B cell (primary cell): ENCODE measurements at regions of chr11 and their contacts with region 1.

Region 1: DNA sequence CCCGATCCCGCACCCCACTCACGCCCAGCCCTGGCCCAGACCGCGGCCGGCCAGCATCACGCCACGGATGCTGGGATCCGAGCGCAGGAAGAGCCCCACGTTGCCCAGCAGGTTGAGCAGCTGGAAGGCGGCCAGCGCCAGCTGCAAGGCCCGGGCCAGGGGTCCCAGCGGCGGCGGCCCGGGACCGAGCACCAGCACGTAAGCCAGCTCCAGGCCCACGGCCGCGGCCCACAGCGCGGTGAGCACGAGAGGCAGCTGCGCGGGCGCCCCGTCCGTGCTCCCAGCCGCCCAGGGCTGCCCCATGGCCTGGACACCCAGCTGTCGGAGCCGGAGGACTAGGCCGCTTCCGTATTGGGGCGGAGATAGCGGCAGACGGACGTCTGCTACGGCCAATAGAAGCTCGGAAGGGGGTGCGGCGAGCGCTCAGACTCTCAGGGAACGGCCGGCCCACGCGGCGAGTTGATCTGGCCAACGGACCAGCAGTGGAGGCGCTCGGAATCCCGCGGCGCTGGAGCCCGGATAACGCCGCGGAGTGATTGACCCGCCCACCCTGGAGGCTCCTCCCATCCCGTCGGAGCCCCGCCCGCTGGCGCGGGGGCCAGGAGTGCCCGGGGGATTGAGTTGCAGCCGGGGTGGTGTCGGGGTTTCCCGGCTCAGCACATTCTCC is at the start of gene ZDHHC24:
- DNase-seq: peak; percentile 91
- ATAC-seq: peak; percentile 82
- H3K4me3 ChIP-seq: peak within 1 kb of the TSS; percentile 74 to 89 (median 83)
- H3K4me3 Mint-ChIP-seq: peak within 1 kb of the TSS; percentile 95
- H3K27ac ChIP-seq: peak within 1 kb of the TSS; percentile 62 to 91
- H3K27ac Mint-ChIP-seq: peak within 1 kb of the TSS; percentile 89
- H3K4me1 ChIP-seq: peaks cover 26 to 34% of the 10 kb centered on the region in 2 donors
- H3K4me1 Mint-ChIP-seq: peaks cover 42% of the 10 kb centered on the region
- H3K27me3 ChIP-seq: no peaks in the 10 kb centered on the region
- H3K27me3 Mint-ChIP-seq: no peaks in the 10 kb centered on the region
- CTCF ChIP-seq: no peak
- total RNA-seq, gene ZDHHC24: 32.6 and 33.2 TPM in 2 replicates

Region 2: DNA sequence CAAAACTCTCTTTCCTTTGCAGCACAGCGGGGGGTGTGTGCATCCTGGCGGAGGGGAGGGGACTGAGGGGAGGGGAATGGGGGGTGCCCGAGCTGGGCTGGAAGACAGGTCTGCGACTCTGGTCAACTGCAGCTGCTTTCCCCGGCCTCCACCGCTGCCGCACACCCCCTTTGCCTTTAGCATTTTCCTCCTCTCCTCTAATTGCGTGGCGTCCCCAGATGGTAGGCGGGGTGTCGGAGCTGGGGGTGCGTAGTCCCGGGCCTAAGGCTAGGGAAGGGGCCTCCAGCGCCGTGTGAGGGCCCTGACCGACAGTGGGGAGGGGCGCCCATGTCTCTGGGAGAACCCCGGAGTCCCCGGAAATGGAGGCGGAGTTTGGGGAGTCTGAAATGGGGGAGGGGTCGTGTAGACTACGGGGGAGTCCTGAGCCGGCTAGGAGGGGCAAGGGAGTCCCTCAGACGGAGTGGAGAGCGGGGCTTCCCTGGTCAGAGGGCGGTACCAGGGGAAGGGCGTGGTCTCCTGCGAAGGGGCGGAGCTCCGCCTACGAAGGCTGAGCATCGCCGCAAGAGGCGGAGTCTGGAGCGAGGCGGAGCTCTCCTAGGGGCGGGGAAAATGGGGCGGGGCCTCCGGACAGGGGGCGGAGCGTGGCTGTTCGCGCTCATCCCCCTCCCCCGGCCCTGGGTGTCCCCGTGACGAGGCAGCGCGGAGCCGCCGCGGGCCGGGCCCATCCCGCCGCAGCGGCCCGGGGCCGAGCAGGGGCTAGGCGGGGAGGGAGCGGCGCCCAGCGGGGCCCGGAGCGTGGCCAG is 79.4 kb before region 1 on chr11 and contains the start of gene PELI3:
- CTCF ChIA-PET with region 1: interaction called, 4 read pairs
- POLR2A ChIA-PET with region 1: interaction called, 3 read pairs
- intact Hi-C with region 1: loop called (anchors 1 kb)
- DNase-seq: peak; percentile 97
- ATAC-seq: peak; percentile 92
- H3K4me3 ChIP-seq: peak within 1 kb of the TSS; percentile 19 to 82 (median 71)
- H3K4me3 Mint-ChIP-seq: peak within 1 kb of the TSS; percentile 95
- H3K27ac ChIP-seq: peak within 1 kb of the TSS; percentile 81 to 84
- H3K27ac Mint-ChIP-seq: peak within 1 kb of the TSS; percentile 89
- H3K4me1 ChIP-seq: peaks cover 35 to 40% of the 10 kb centered on the region in 2 donors
- H3K4me1 Mint-ChIP-seq: peaks cover 35% of the 10 kb centered on the region
- H3K27me3 ChIP-seq: no peaks in the 10 kb centered on the region
- H3K27me3 Mint-ChIP-seq: no peaks in the 10 kb centered on the region
- CTCF ChIP-seq: no peak
- total RNA-seq, gene PELI3: 15.6 and 17.0 TPM in 2 replicates

Region 3: GRCh38 chr11:66480117-66480938 is 65.5 kb before region 1 on chr11 and contains the start of gene DPP3:
- CTCF ChIA-PET with region 1: no interaction called
- POLR2A ChIA-PET with region 1: interaction called, 3 read pairs
- intact Hi-C with region 1: loop called (anchors 2 kb)
- DNase-seq: peak; percentile 96
- ATAC-seq: peak; percentile 97
- H3K4me3 ChIP-seq: peak within 1 kb of the TSS; percentile 36 to 92 (median 71)
- H3K4me3 Mint-ChIP-seq: peak within 1 kb of the TSS; percentile 92
- H3K27ac ChIP-seq: peak within 1 kb of the TSS; percentile 63 to 85
- H3K27ac Mint-ChIP-seq: peak within 1 kb of the TSS; percentile 93
- H3K4me1 ChIP-seq: peaks cover 10 to 20% of the 10 kb centered on the region in 2 donors
- H3K4me1 Mint-ChIP-seq: peaks cover 20% of the 10 kb centered on the region
- H3K27me3 ChIP-seq: no peaks in the 10 kb centered on the region
- H3K27me3 Mint-ChIP-seq: no peaks in the 10 kb centered on the region
- CTCF ChIP-seq: no peak
- total RNA-seq, gene DPP3: 21.5 and 22.7 TPM in 2 replicates

Region 4: GRCh38 chr11:66510271-66510989 is 35.4 kb before region 1 on chr11 and contains the start of gene BBS1:
- CTCF ChIA-PET with region 1: no interaction called
- POLR2A ChIA-PET with region 1: interaction called, 7 read pairs
- intact Hi-C with region 1: loop called (anchors 1 kb)
- DNase-seq: peak; percentile 87
- ATAC-seq: peak; percentile 94
- H3K4me3 ChIP-seq: peak within 1 kb of the TSS; percentile 55 to 89 (median 85)
- H3K4me3 Mint-ChIP-seq: peak within 1 kb of the TSS; percentile 91
- H3K27ac ChIP-seq: peak within 1 kb of the TSS in 1 of 2 donors; percentile 40
- H3K27ac Mint-ChIP-seq: peak within 1 kb of the TSS; percentile 61
- H3K4me1 ChIP-seq: peaks cover 11 to 14% of the 10 kb centered on the region in 2 donors
- H3K4me1 Mint-ChIP-seq: peaks cover 16% of the 10 kb centered on the region
- H3K27me3 ChIP-seq: no peaks in the 10 kb centered on the region
- H3K27me3 Mint-ChIP-seq: no peaks in the 10 kb centered on the region
- CTCF ChIP-seq: no peak
- total RNA-seq, gene BBS1: 52.5 and 56.3 TPM in 2 replicates

Region 5: GRCh38 chr11:66592457-66593302 is 46.8 kb after region 1 on chr11 and contains the starts of genes CCDC87 and CCS:
- CTCF ChIA-PET with region 1: interaction called, 3 read pairs
- POLR2A ChIA-PET with region 1: interaction called, 4 read pairs
- intact Hi-C with region 1: loop called (anchors 1 kb)
- DNase-seq: peak; percentile 96
- ATAC-seq: peak; percentile 95
- H3K4me3 ChIP-seq: peak within 1 kb of the TSS; percentile 63 to 84 (median 77)
- H3K4me3 Mint-ChIP-seq: peak within 1 kb of the TSS; percentile 100
- H3K27ac ChIP-seq: peak within 1 kb of the TSS; percentile 61 to 86
- H3K27ac Mint-ChIP-seq: peak within 1 kb of the TSS; percentile 99
- H3K4me1 ChIP-seq: peaks cover 28 to 29% of the 10 kb centered on the region in 2 donors
- H3K4me1 Mint-ChIP-seq: peaks cover 40% of the 10 kb centered on the region
- H3K27me3 ChIP-seq: no peaks in the 10 kb centered on the region
- H3K27me3 Mint-ChIP-seq: no peaks in the 10 kb centered on the region
- CTCF ChIP-seq: peak; percentile 77
- total RNA-seq, gene CCDC87: 0.17 and 0.39 TPM in 2 replicates
- total RNA-seq, gene CCS: 87.8 and 98.5 TPM in 2 replicates

Region 6: GRCh38 chr11:66616379-66617154 is 70.7 kb after region 1 on chr11 and contains the start of gene RBM14:
- CTCF ChIA-PET with region 1: no interaction called
- POLR2A ChIA-PET with region 1: no interaction called
- intact Hi-C with region 1: loop called (anchors 2 kb)
- DNase-seq: peak; percentile 99
- ATAC-seq: peak; percentile 89
- H3K4me3 ChIP-seq: peak within 1 kb of the TSS; percentile 75 to 97 (median 94)
- H3K4me3 Mint-ChIP-seq: peak within 1 kb of the TSS; percentile 99
- H3K27ac ChIP-seq: peak within 1 kb of the TSS; percentile 85 to 90
- H3K27ac Mint-ChIP-seq: peak within 1 kb of the TSS; percentile 99
- H3K4me1 ChIP-seq: peaks cover 53 to 65% of the 10 kb centered on the region in 2 donors
- H3K4me1 Mint-ChIP-seq: peaks cover 59% of the 10 kb centered on the region
- H3K27me3 ChIP-seq: no peaks in the 10 kb centered on the region
- H3K27me3 Mint-ChIP-seq: no peaks in the 10 kb centered on the region
- CTCF ChIP-seq: no peak
- total RNA-seq, gene RBM14: 244 and 246 TPM in 2 replicates

Region 7: GRCh38 chr11:66815646-66816045 is 269.8 kb after region 1 on chr11:
- CTCF ChIA-PET with region 1: no interaction called
- POLR2A ChIA-PET with region 1: no interaction called
- intact Hi-C with region 1: no loop called
- DNase-seq: no peak
- ATAC-seq: no peak
- H3K4me3 ChIP-seq: no peak overlapping the region
- H3K4me3 Mint-ChIP-seq: no peak overlapping the region
- H3K27ac ChIP-seq: no peak overlapping the region
- H3K27ac Mint-ChIP-seq: no peak overlapping the region
- H3K4me1 ChIP-seq: no peaks in the 10 kb centered on the region
- H3K4me1 Mint-ChIP-seq: no peaks in the 10 kb centered on the region
- H3K27me3 ChIP-seq: no peaks in the 10 kb centered on the region
- H3K27me3 Mint-ChIP-seq: no peaks in the 10 kb centered on the region
- CTCF ChIP-seq: no peak

Region 8: DNA sequence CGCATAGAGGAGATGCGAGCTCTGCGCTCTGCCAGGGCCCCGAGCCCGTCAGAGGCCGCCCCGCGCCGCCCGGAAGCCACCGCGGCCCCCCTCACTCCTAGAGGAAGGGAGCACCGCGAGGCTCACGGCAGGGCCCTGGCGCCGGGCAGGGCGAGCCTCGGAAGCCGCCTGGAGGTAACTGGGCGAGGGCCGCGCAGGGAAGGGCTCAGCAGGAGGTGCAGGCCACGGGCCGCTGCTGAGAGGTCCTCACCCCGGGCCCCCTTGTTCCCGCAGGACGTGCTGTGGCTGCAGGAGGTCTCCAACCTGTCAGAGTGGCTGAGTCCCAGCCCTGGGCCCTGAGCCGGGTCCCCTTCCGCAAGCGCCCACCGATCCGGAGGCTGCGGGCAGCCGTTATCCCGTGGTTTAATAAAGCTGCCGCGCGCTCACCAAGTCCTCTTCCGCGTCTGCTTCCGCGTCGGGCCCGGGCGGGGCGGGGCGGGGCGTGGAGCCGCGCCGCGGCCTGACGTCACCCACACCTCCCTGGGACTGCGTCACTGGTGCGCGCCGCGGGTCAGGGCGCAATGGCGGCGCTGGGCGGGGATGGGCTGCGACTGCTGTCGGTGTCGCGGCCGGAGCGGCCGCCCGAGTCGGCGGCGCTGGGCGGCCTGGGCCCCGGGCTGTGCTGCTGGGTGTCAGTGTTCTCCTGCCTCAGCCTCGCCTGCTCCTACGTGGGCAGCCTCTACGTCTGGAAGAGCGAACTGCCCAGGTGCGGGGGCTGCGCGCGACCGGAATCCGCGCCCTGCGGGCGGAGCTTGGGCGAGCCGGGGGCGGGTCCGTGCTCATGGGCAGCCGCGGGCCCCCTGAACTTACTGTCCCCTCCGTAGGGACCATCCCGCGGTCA is 297.3 kb after region 1 on chr11 and contains the start of gene RCE1:
- CTCF ChIA-PET with region 1: no interaction called
- POLR2A ChIA-PET with region 1: no interaction called
- intact Hi-C with region 1: loop called (anchors 2 kb)
- DNase-seq: peak; percentile 96
- ATAC-seq: peak; percentile 91
- H3K4me3 ChIP-seq: peak within 1 kb of the TSS; percentile 74 to 100 (median 95)
- H3K4me3 Mint-ChIP-seq: peak within 1 kb of the TSS; percentile 90
- H3K27ac ChIP-seq: peak within 1 kb of the TSS; percentile 98 to 99
- H3K27ac Mint-ChIP-seq: peak within 1 kb of the TSS; percentile 94
- H3K4me1 ChIP-seq: peaks cover 28 to 37% of the 10 kb centered on the region in 2 donors
- H3K4me1 Mint-ChIP-seq: peaks cover 43% of the 10 kb centered on the region
- H3K27me3 ChIP-seq: no peaks in the 10 kb centered on the region
- H3K27me3 Mint-ChIP-seq: no peaks in the 10 kb centered on the region
- CTCF ChIP-seq: no peak
- total RNA-seq, gene RCE1: 31.6 and 34.3 TPM in 2 replicates